ENCODE measurements at regions of chr7 and their contacts with region 1.

Region 1: DNA sequence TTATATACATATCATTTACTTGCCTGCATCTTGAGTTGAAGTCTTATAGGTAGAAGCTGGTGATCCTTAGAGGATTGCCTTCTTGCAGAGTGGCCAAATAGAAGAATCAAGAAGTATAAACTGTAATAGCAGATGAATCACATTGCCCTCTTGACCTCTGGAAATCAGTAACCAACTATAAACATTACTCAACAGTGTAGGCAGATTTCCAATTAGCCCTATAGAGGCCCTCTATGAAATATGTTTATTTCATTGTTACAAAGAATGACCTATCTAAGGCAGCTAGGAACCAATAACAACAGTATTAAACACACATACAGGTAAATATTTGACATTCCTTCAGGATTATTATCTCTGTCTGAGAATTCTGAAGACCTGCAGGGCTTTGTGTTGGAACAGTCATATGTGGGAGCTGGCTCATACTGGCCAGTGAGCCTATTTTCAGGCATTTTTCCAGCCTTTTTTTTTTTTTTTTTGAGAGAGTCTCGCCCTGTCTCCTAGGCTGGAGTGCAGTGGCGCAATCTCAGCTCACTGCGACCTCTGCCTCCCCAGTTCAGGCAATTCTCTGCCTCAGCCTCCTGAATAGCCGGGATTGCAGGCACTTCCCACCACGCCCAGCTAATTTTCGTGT is 7.2 kb upstream of the SRI start:
- DNase-seq: peak; percentile 83 to 99
- H3K4me3 ChIP-seq: peak overlapping the region; percentile 15; the same call in 1 of the 2 replicates
- H3K27ac ChIP-seq: peak overlapping the region; percentile 95
- H3K4me1 ChIP-seq: peaks cover 43% of the 10 kb centered on the region
- H3K27me3 ChIP-seq: no peaks in the 10 kb centered on the region
- CTCF ChIP-seq: no peak

Region 2: GRCh38 chr7:86768967-86769760 is 1457.8 kb before region 1 on chr7:
- CTCF ChIA-PET with region 1: no interaction called
- POLR2A ChIA-PET with region 1: no interaction called
- intact Hi-C with region 1: no loop called
- DNase-seq: no peak
- H3K4me3 ChIP-seq: no peak overlapping the region
- H3K27ac ChIP-seq: no peak overlapping the region
- H3K4me1 ChIP-seq: no peaks in the 10 kb centered on the region
- H3K27me3 ChIP-seq: no peaks in the 10 kb centered on the region
- CTCF ChIP-seq: no peak

Region 3: DNA sequence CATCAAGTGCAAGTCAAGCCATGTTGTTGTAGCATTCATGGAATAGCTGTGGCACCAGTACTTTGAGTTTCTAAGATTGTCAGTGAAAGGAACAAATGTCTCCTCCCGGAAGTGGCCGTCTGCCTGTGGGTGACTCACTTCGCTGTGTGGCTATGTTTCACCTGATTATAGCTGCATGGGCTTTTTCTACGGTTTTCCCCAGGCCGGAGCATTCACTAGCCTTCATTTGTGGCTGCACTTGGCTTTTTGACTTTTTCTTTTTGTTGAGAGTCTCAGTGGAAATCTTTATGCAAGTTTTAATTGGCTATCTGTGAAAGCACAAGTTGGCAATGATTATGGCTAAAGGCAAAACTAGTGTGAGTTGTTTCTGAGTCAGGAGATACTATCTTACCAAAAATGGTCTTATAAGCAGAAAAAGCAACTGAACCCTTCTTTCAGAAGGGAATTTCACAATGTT is 42.1 kb before region 1 on chr7:
- CTCF ChIA-PET with region 1: no interaction called
- POLR2A ChIA-PET with region 1: no interaction called
- intact Hi-C with region 1: loop called (anchors 5 kb)
- DNase-seq: peak; percentile 46 to 61
- H3K4me3 ChIP-seq: no peak overlapping the region; the same call in 1 of the 2 replicates
- H3K27ac ChIP-seq: 0 out of 2 replicates have a peak overlapping the region, but pooled peaks have one; percentile 40
- H3K4me1 ChIP-seq: peaks cover 23% of the 10 kb centered on the region
- H3K27me3 ChIP-seq: no peaks in the 10 kb centered on the region
- CTCF ChIP-seq: no peak

Region 4: DNA sequence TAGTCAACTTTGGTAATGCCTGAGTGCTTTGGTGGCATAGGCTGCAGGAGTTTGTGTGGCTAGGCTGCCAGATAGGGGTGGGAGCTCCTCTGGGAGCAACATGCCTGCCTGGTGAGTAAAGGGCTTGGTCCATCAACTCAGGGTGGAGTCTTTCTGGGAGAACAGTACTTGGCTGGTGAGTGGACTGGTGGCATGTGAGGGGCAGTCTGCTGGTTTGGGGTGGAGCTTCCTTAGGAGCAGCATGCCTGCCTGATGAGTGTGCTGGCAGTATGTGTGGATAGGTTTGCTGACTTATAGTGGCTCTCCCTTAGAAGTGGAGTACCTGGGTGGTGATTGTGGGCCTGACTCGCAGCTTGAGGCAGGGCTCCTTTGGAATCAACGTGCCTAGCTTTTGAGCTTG is 27.7 kb after region 1 on chr7:
- CTCF ChIA-PET with region 1: interaction called, 5 read pairs
- POLR2A ChIA-PET with region 1: interaction called, 3 read pairs
- intact Hi-C with region 1: loop called (anchors 1 kb)
- DNase-seq: peak; percentile 89 to 95
- H3K4me3 ChIP-seq: peak overlapping the region; percentile 23; the same call in 1 of the 2 replicates
- H3K27ac ChIP-seq: peak overlapping the region; percentile 88
- H3K4me1 ChIP-seq: peaks cover 56% of the 10 kb centered on the region
- H3K27me3 ChIP-seq: no peaks in the 10 kb centered on the region
- CTCF ChIP-seq: no peak

Region 5: DNA sequence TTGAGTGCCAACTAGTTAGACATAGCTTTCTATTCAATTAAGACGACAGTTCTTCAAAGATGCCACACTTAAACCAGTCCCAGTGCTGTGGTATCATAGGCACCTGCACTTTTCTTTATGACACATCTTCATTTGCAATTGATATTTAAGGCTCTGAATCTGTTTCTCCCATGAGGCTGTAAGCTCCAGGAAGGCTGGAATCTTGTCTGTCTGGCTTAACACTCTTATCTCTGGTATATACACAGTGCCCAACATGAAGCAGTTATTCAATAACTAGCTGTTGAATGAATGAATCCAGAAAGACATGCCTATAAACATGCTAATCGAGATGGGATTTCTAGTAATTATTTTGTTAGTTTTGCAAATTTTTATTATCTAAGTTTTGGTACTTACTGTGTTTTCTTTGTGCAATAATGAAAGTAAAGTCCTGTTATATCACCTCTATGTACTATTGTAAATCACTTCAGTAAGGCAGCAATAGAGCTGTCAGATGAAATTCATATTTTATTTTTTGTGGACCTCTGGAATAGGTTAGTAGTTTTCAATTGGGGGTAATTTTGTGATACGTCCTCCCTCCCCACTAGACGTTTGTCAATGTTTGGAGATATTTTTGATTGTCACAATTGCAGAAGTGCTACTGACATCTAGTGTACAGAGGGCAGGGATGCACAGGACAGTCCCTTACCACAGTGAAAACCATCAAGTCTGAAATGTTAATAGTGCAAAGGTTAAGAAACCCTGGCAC is 131.0 kb after region 1 on chr7:
- CTCF ChIA-PET with region 1: no interaction called
- POLR2A ChIA-PET with region 1: interaction called, 6 read pairs
- intact Hi-C with region 1: loop called (anchors 1 kb)
- DNase-seq: no peak
- H3K4me3 ChIP-seq: no peak overlapping the region
- H3K27ac ChIP-seq: no peak overlapping the region
- H3K4me1 ChIP-seq: peaks cover 15% of the 10 kb centered on the region
- H3K27me3 ChIP-seq: no peaks in the 10 kb centered on the region
- CTCF ChIP-seq: peak; percentile 70

Region 6: DNA sequence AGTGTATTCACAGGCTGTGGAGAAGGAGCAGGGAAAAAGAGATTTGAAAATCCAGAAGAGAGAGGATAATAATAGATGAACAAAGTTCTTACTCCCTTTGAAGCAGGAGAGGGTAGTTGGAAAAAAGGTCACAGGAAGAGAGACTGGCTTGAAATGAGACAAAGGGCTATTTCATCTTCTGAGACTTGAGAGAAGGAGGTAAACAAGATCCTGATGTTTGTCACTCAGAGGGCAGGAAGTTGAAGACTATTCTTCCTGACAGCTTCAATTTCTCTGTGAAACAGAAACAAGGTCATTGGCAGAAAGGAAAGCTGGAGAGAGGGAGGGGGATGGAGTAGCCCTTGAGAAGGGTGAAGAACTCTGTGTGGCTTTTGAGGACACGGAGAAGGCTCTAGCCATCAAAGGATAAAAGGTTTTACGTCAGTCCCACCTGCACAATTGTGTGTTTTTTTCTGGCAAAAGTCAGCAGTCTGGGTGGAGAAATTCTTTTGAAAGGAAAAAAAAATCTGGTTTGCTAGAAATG is 295.8 kb after region 1 on chr7:
- CTCF ChIA-PET with region 1: interaction called, 12 read pairs
- POLR2A ChIA-PET with region 1: no interaction called
- intact Hi-C with region 1: no loop called
- DNase-seq: no peak
- H3K4me3 ChIP-seq: no peak overlapping the region
- H3K27ac ChIP-seq: no peak overlapping the region
- H3K4me1 ChIP-seq: no peaks in the 10 kb centered on the region
- H3K27me3 ChIP-seq: no peaks in the 10 kb centered on the region
- CTCF ChIP-seq: no peak